A673 (cell line): ENCODE measurements at regions of chr3 and their contacts with region 1.

Region 1: GRCh38 chr3:52845691-52846431 is 11.0 kb upstream of the MUSTN1 start:
- DNase-seq: no peak
- H3K4me3 ChIP-seq: no peak overlapping the region
- H3K27ac ChIP-seq: no peak overlapping the region
- H3K4me1 ChIP-seq: no peaks in the 10 kb centered on the region
- H3K27me3 ChIP-seq: no peaks in the 10 kb centered on the region
- CTCF ChIP-seq: peak; percentile 49

Region 2: GRCh38 chr3:52723935-52724334 is 121.9 kb before region 1 on chr3:
- CTCF ChIA-PET with region 1: interaction called, 10 read pairs
- POLR2A ChIA-PET with region 1: no interaction called
- intact Hi-C with region 1: no loop called
- DNase-seq: no peak
- H3K4me3 ChIP-seq: no peak overlapping the region
- H3K27ac ChIP-seq: no peak overlapping the region
- H3K4me1 ChIP-seq: no peaks in the 10 kb centered on the region
- H3K27me3 ChIP-seq: no peaks in the 10 kb centered on the region
- CTCF ChIP-seq: no peak

Region 3: GRCh38 chr3:53970661-53971060 is 1124.8 kb after region 1 on chr3:
- CTCF ChIA-PET with region 1: no interaction called
- POLR2A ChIA-PET with region 1: no interaction called
- intact Hi-C with region 1: no loop called
- DNase-seq: no peak
- H3K4me3 ChIP-seq: no peak overlapping the region
- H3K27ac ChIP-seq: no peak overlapping the region
- H3K4me1 ChIP-seq: no peaks in the 10 kb centered on the region
- H3K27me3 ChIP-seq: no peaks in the 10 kb centered on the region
- CTCF ChIP-seq: no peak